Natural killer cell (primary cell): ENCODE measurements at regions of chr4 and their contacts with region 1.

Region 1: DNA sequence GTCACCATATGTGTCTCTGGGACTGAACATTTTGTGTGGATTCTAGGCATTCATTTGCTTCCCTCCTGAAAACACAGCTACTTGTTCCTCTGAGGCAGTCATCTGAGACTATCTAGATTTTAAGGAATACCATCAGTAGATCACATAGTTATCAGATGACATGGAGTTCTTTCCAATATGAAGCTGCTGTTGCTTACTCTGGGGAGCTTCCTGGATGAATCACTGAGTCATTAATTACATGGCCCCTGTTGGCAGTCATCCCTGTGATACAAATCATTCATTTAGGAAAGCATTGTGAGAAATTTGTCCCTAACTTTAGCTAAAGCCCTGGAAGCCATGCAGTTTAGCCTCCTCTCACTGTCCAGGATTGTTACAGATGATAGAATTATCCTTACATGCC is 98.2 kb upstream of the ARSJ start:
- DNase-seq: no peak
- ATAC-seq: no peak
- H3K4me3 ChIP-seq: no peak overlapping the region
- H3K4me3 Mint-ChIP-seq: no peak overlapping the region
- H3K27ac ChIP-seq: no peak overlapping the region
- H3K27ac Mint-ChIP-seq: no peak overlapping the region
- H3K4me1 ChIP-seq: no peaks in the 10 kb centered on the region
- H3K4me1 Mint-ChIP-seq: no peaks in the 10 kb centered on the region
- H3K27me3 ChIP-seq: no peaks in the 10 kb centered on the region
- H3K27me3 Mint-ChIP-seq: peaks cover 6 to 27% of the 10 kb centered on the region in 2 donors
- CTCF ChIP-seq: no peak

Region 2: DNA sequence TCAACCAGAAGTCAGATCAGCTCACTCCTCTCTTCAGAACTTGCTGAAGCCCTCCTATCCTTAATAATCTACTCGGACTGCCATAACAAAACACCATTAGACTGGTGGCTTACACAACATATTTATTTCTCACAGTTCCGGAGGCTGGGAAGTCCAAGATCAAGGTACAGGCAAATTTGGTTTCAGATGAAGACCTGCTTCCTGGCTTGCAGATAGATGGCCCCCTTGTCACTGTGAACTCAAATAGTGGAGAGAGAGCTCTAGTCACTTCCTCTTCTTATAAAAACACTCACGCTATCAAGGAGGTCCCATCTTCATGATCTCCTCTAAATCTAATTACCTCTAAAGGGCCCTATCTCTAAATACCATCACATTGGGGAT is 441.2 kb before region 1 on chr4:
- intact Hi-C with region 1: loop called (anchors 5 kb)
- DNase-seq: peak in 1 of 2 donors; percentile 65
- ATAC-seq: peak; percentile 79 to 89 (median 87)
- H3K4me3 ChIP-seq: no peak overlapping the region
- H3K4me3 Mint-ChIP-seq: peak overlapping the region; percentile 69
- H3K27ac ChIP-seq: peak overlapping the region; percentile 50
- H3K27ac Mint-ChIP-seq: peak overlapping the region; percentile 60 to 84
- H3K4me1 ChIP-seq: peaks cover 24% of the 10 kb centered on the region
- H3K4me1 Mint-ChIP-seq: peaks cover 43 to 45% of the 10 kb centered on the region in 2 donors
- H3K27me3 ChIP-seq: no peaks in the 10 kb centered on the region
- H3K27me3 Mint-ChIP-seq: no peaks in the 10 kb centered on the region
- CTCF ChIP-seq: peak; percentile 45

Region 3: GRCh38 chr4:113773014-113773413 is 304.6 kb before region 1 on chr4:
- intact Hi-C with region 1: loop called (anchors 10 kb)
- DNase-seq: peak; percentile 21 to 28
- ATAC-seq: peak; percentile 50 to 79 (median 79)
- H3K4me3 ChIP-seq: peak overlapping the region; percentile 21
- H3K4me3 Mint-ChIP-seq: peak overlapping the region; percentile 78
- H3K27ac ChIP-seq: peak overlapping the region; percentile 46
- H3K27ac Mint-ChIP-seq: peak overlapping the region; percentile 73 to 90
- H3K4me1 ChIP-seq: peaks cover 10% of the 10 kb centered on the region
- H3K4me1 Mint-ChIP-seq: peaks cover 17 to 19% of the 10 kb centered on the region in 2 donors
- H3K27me3 ChIP-seq: no peaks in the 10 kb centered on the region
- H3K27me3 Mint-ChIP-seq: no peaks in the 10 kb centered on the region
- CTCF ChIP-seq: no peak

Region 4: DNA sequence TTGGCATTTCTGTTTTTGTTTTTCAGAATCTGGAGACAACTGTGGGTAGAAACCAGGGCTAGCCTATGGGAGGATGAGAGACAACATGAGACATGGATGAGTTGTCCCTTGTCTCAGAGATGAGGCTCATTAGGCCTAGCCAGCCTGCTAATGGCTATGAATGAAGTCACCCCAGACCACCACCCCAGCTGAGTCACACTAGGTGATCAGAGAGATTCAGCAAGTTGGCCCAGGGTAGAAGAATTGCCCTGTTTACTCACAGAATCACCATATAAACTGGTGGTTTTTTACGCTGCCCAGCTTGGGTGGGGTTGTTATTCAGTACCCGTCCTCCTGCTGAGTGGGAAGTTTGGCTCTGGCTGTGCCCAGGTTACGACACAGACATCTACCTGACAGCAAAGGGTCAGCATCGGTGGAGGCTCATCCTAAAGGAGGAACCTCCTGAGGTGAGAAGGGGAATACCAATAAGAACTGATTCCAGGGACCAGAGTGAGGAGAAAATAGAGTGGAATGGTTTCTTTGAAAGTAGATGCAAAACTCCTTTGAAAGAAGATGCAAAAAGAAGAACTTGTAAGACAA is 80.9 kb before region 1 on chr4:
- intact Hi-C with region 1: no loop called
- DNase-seq: no peak
- ATAC-seq: peak in 2 of 3 donors; percentile 12 to 64
- H3K4me3 ChIP-seq: no peak overlapping the region
- H3K4me3 Mint-ChIP-seq: no peak overlapping the region
- H3K27ac ChIP-seq: no peak overlapping the region
- H3K27ac Mint-ChIP-seq: peak overlapping the region in 1 of 2 donors; percentile 33
- H3K4me1 ChIP-seq: peaks cover 2% of the 10 kb centered on the region
- H3K4me1 Mint-ChIP-seq: peaks cover 8 to 16% of the 10 kb centered on the region in 2 donors
- H3K27me3 ChIP-seq: no peaks in the 10 kb centered on the region
- H3K27me3 Mint-ChIP-seq: peaks cover 0 to 3% of the 10 kb centered on the region in 2 donors
- CTCF ChIP-seq: no peak

Region 5: DNA sequence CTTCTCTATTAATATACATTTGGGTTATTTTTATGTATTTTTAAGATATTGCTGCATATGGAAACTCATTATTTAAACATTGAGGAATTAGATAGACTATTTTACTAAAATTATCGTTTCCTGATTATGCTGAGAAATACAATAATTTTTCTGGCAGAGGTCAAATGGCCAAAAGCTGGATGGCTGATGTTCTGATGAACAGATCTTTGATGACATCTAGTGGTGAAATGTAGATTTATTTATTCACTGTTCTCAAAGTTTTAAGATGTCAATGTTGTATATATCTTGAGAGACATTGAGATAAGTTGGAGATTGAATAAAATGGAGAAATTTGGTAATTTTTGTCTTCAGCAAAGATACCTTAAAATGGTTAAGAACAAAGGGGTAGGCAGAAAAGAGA is 617.2 kb after region 1 on chr4:
- intact Hi-C with region 1: loop called (anchors 10 kb)
- DNase-seq: peak in 1 of 2 donors; percentile 44
- ATAC-seq: no peak
- H3K4me3 ChIP-seq: no peak overlapping the region
- H3K4me3 Mint-ChIP-seq: no peak overlapping the region
- H3K27ac ChIP-seq: no peak overlapping the region
- H3K27ac Mint-ChIP-seq: no peak overlapping the region
- H3K4me1 ChIP-seq: no peaks in the 10 kb centered on the region
- H3K4me1 Mint-ChIP-seq: no peaks in the 10 kb centered on the region
- H3K27me3 ChIP-seq: no peaks in the 10 kb centered on the region
- H3K27me3 Mint-ChIP-seq: peaks cover 0 to 7% of the 10 kb centered on the region in 2 donors
- CTCF ChIP-seq: peak; percentile 60